ENCODE measurements at regions of chr5 and their contacts with region 1.

Region 1: DNA sequence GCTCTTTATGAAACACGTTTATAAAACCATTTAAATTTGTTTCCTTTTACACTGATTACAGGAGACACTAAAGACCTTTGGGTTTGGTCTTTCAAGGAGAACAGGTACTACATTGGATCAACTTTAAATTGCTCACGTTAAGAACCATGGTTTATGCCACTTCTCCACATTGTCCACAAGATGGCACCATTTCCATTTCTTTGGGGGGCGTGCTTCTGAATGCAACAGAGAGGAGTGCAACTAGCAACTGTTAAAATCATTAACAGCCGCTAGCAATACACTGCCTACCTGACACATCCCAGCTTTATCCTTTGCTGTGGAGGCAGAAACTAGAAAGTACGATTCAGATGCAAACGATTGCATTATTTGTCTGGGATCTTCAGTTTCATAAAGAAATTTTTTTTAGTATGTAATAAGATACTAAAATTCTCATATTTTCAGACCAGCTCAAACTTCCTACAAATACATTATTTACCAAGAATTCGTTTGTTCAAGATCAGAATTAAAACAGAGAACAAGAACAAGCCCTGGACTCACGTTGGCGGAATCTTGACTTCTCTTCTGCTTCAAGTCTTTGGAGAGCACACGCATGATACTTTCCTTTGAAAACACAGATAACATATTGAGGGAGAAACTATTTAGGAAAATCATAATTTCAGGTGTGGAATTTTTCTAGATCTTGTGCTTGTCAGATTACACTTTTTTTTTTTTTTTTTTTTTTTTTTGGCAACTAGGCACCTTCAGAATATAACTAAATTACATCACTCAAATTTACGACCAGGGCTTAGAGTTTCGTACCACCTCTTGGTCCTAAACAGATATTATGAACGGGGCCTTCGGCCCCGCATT is 702 bp downstream of the CDC20B start:
- DNase-seq: peak; percentile 79
- H3K4me3 ChIP-seq: peak overlapping the region in 2 of 3 experiments; percentile 28 to 46
- H3K27ac ChIP-seq: no peak overlapping the region
- H3K4me1 ChIP-seq: peaks cover 21% of the 10 kb centered on the region
- H3K27me3 ChIP-seq: peaks cover 31 to 39% of the 10 kb centered on the region in 2 experiments
- CTCF ChIP-seq: peak; percentile 60 to 70
- POLR2A ChIP-seq: no peak

Region 2: DNA sequence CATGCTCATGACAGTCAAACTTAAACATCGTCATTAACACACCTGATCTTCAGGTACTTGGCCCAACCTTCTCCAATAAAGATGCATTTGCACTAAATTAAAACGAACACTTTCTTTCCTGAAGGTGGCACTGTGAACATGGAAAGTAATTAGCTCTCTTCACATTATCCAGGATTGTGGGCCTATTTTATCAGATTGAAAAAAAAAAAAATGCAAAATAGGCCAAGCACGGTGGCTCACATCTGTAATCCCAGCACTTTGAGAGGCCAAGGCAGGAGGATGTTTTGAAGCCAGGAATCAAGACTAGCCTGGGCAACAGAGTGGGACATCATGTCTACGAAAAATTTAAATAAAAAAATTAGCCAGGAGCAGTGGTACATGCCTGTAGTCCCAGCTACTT is 15.1 kb after region 1 on chr5:
- CTCF ChIA-PET with region 1: interaction called, 14 read pairs
- POLR2A ChIA-PET with region 1: no interaction called
- dilution Hi-C with region 1: no loop called
- intact Hi-C with region 1: no loop called
- DNase-seq: peak; percentile 27
- H3K4me3 ChIP-seq: no peak overlapping the region
- H3K27ac ChIP-seq: no peak overlapping the region
- H3K4me1 ChIP-seq: no peaks in the 10 kb centered on the region
- H3K27me3 ChIP-seq: peaks cover 34 to 65% of the 10 kb centered on the region in 2 experiments
- CTCF ChIP-seq: no peak
- POLR2A ChIP-seq: no peak

Region 3: GRCh38 chr5:55218945-55219344 is 46.7 kb after region 1 on chr5:
- CTCF ChIA-PET with region 1: no interaction called
- POLR2A ChIA-PET with region 1: no interaction called
- dilution Hi-C with region 1: no loop called
- intact Hi-C with region 1: no loop called
- DNase-seq: no peak
- H3K4me3 ChIP-seq: no peak overlapping the region
- H3K27ac ChIP-seq: no peak overlapping the region
- H3K4me1 ChIP-seq: peaks cover 9% of the 10 kb centered on the region
- H3K27me3 ChIP-seq: peaks cover 39 to 58% of the 10 kb centered on the region in 2 experiments
- CTCF ChIP-seq: no peak
- POLR2A ChIP-seq: no peak

Region 4: DNA sequence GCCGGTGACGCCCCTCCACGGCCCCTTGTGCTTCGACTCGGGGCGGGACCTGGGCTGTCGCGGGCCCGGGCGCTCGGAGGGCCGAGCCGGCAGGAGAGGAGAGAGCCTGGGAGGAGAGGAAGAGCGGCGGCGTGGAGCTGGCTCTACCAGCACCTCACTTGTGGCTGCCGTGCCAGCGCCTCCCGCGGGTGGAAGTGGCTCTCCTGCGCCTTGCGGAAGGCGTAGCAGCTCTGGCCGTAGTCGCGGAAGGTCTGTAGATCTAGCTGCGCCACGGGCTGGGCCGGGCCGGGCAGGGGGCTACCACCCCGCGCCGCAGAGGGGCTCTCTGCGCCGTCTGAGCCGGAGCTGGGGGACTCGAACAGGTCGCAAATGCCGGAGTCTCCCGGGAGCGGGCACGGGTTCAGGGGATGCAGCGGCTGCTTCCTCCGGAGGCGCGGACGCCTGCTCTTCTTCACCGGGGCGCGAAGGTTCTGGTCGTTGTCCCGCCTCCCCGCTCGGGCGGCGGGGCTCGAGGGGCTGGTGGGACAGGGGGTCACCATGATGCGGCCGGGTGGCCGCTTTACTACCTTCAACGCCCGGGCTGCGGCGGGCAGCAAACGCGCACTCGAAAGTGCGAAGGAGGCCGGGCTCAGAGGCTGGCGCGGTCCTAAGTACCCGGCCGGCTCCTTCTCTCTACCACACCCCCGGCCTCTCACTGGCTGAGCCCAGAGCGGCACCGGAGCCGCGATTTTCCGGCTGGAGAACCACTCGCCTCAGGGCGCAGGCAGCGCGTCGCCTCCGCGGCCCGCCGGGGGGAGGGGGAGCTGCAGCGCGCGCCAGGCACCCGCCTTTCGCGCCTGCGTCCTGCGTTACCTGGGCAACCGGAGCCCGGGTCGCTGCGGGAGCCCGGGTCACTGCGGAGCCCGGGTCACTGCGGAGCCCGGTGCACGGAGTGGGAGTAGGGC is 61.0 kb after region 1 on chr5 and contains the start of gene CCNO:
- CTCF ChIA-PET with region 1: interaction called, 5 read pairs
- POLR2A ChIA-PET with region 1: no interaction called
- dilution Hi-C with region 1: loop called (anchors 10 kb)
- intact Hi-C with region 1: loop called (anchors 2 kb)
- DNase-seq: peak; percentile 83
- H3K4me3 ChIP-seq: peak within 1 kb of the TSS; percentile 44 to 70 (median 53)
- H3K27ac ChIP-seq: no peak within 1 kb of the TSS
- H3K4me1 ChIP-seq: peaks cover 26% of the 10 kb centered on the region
- H3K27me3 ChIP-seq: peaks cover 45% of the 10 kb centered on the region in 2 experiments
- CTCF ChIP-seq: no peak
- POLR2A ChIP-seq: no peak
- total RNA-seq, gene CCNO: 0.58 and 0.88 TPM in 2 replicates

Region 5: GRCh38 chr5:55278778-55279177 is 106.5 kb after region 1 on chr5:
- CTCF ChIA-PET with region 1: no interaction called
- POLR2A ChIA-PET with region 1: no interaction called
- dilution Hi-C with region 1: no loop called
- intact Hi-C with region 1: loop called (anchors 2 kb)
- DNase-seq: no peak
- H3K4me3 ChIP-seq: no peak overlapping the region
- H3K27ac ChIP-seq: no peak overlapping the region
- H3K4me1 ChIP-seq: no peaks in the 10 kb centered on the region
- H3K27me3 ChIP-seq: no peaks in the 10 kb centered on the region
- CTCF ChIP-seq: no peak
- POLR2A ChIP-seq: no peak

Region 6: DNA sequence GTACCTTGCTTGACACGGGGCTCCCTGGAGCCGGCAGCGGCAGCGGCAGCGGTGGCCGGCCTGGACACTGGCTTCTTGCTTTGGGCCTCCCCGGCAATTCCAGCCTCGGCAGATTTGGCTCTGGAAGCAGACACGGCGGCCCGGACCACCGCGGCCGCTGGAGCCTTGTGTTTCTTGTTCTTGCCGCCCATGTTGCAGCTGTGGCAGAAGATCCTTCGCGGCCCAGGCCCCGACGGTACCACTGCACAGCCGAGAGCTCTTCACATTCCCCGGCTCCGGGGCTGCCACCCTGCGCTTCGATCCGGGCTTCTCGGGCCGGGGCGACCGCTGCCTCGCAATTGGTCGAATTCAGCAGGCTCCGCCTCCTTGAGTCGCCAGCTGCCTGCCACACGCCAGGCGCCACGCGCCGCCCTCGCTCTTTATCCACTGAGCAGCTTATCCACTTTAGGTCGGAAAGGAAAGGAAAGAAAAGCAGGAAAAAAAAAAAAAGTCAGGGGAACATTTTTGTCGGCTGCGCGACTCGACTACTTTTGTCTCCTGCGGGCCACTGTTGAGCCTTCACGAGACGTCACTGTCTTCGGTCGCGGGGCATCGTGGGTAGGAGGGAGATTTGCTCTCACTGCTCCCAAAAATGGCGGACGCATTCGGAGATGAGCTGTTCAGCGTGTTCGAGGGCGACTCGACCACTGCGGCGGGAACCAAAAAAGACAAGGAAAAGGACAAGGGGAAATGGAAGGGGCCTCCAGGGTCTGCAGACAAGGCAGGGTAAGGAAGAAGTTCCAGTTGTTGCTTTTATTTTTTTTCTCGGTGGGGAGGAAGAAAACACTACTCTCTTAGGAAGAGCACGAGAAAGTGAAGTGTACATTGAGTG is 135.3 kb after region 1 on chr5 and contains the starts of genes DHX29 and MTREX:
- CTCF ChIA-PET with region 1: interaction called, 3 read pairs
- POLR2A ChIA-PET with region 1: no interaction called
- dilution Hi-C with region 1: no loop called
- intact Hi-C with region 1: loop called (anchors 2 kb)
- DNase-seq: peak; percentile 97
- H3K4me3 ChIP-seq: peak within 1 kb of the TSS; percentile 77 to 99 (median 81)
- H3K27ac ChIP-seq: peak within 1 kb of the TSS; percentile 82
- H3K4me1 ChIP-seq: peaks cover 45% of the 10 kb centered on the region
- H3K27me3 ChIP-seq: no peaks in the 10 kb centered on the region
- CTCF ChIP-seq: no peak
- POLR2A ChIP-seq: peak; percentile 48
- total RNA-seq, gene DHX29: 28.0 and 32.8 TPM in 2 replicates
- total RNA-seq, gene MTREX: 76.3 and 77.2 TPM in 2 replicates

Measured in endothelial cell of umbilical vein (primary cell).